AG04450 (cell line): ENCODE measurements at regions of chr3 and their contacts with region 1.

Region 1: GRCh38 chr3:33372218-33373081 is 67.8 kb downstream of the UBP1 start:
- DNase-seq: no peak
- H3K4me3 ChIP-seq: no peak overlapping the region
- H3K27ac ChIP-seq: no peak overlapping the region
- H3K27me3 ChIP-seq: no peaks in the 10 kb centered on the region
- CTCF ChIP-seq: peak; percentile 95

Region 2: GRCh38 chr3:32947789-32948238 is 424.6 kb before region 1 on chr3:
- CTCF ChIA-PET with region 1: interaction called, 27 read pairs
- POLR2A ChIA-PET with region 1: no interaction called
- DNase-seq: peak; percentile 51
- H3K4me3 ChIP-seq: no peak overlapping the region
- H3K27ac ChIP-seq: no peak overlapping the region
- H3K27me3 ChIP-seq: peaks cover 9% of the 10 kb centered on the region
- CTCF ChIP-seq: peak; percentile 84

Region 3: GRCh38 chr3:33122991-33123390 is 249.5 kb before region 1 on chr3:
- CTCF ChIA-PET with region 1: interaction called, 17 read pairs
- POLR2A ChIA-PET with region 1: no interaction called
- DNase-seq: no peak
- H3K4me3 ChIP-seq: no peak overlapping the region
- H3K27ac ChIP-seq: no peak overlapping the region
- H3K27me3 ChIP-seq: no peaks in the 10 kb centered on the region
- CTCF ChIP-seq: no peak

Region 4: DNA sequence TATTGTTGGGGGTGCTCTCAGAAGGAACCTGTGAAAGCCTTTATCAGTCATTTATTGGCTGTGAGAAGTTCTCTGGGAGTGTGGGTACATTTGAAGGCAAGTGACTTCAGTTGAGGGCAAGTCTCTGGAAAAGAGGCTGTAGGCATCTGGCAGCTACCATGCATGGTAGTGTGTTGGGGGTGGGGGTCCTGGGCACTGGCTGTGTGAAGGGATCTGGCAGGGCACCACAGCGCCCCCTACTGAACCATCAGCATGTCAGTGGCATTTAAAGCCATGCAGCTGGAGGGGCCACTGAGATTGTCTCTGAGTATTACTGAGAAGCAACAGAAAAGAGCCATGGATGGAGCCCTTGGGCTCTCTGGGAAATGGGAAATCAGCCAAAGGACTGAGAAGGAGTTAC is 228.0 kb before region 1 on chr3:
- CTCF ChIA-PET with region 1: interaction called, 38 read pairs
- POLR2A ChIA-PET with region 1: interaction called, 3 read pairs
- DNase-seq: no peak
- H3K4me3 ChIP-seq: no peak overlapping the region
- H3K27ac ChIP-seq: no peak overlapping the region
- H3K27me3 ChIP-seq: no peaks in the 10 kb centered on the region
- CTCF ChIP-seq: 0 out of 2 replicates have a peak, but pooled peaks have one; percentile 11

Region 5: DNA sequence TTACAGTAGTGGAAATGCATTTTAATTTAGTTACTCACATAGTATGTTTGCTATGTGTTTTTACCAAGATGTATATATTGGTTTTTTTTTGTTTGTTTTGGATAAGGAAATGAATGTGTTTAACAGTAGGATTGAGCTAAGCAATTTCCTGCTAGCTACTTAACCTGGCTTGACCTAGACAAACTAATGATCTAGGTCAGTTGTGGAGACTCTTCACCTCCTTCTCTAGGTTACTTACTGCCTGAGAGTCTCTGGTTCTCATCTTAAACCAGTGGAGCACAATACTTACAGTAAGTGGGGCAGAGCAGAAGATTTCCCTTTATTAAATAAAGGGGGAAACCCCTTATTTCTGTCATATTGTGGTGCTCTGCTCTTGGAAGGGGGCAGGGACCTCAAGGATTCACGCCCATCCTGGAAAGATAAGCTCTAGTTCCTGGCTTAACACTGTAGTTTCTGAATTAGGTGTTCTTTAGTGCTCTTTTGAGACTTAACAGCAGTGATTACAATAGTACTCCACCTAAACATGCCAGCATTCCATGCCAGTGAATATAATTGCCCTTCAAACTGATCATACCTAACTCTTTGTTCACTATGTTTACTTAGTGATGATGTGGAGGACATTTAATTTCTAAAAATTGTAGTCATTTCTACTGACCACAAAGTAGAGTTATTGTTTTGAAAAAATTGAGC is 12.2 kb before region 1 on chr3:
- CTCF ChIA-PET with region 1: interaction called, 40 read pairs
- POLR2A ChIA-PET with region 1: interaction called, 3 read pairs
- DNase-seq: no peak
- H3K4me3 ChIP-seq: no peak overlapping the region
- H3K27ac ChIP-seq: peak overlapping the region; percentile 21
- H3K27me3 ChIP-seq: no peaks in the 10 kb centered on the region
- CTCF ChIP-seq: no peak

Region 6: DNA sequence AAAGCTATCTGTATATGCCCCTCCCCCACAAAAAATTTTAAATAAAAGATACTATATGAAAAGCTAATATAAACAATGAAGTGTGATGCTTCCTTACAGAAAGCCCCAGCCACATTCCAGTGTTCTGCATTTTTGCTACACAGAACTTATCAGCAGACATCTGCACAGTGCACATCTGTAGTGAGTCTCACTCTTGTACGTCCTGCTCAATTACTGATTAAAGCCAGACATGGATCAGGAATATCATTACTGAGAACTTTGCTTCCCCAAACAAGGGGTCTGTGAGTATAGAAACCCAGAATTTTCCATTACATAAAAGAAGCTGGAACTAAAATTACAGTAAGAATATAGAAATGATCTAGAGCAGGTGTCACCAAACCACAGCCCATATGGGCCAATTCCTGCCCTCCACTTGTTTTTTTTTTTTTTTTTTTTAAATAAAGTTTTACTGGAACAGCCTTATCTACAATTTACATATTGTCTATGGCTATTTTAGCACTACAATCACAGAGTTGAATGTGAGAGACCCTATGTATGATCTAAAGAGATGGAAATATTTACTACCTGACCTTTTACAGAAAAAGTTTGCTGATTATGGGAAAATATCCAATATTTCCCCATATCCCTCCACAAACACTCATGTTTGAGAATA is 22.1 kb after region 1 on chr3:
- CTCF ChIA-PET with region 1: interaction called, 16 read pairs
- POLR2A ChIA-PET with region 1: no interaction called
- DNase-seq: no peak
- H3K4me3 ChIP-seq: no peak overlapping the region
- H3K27ac ChIP-seq: no peak overlapping the region
- H3K27me3 ChIP-seq: no peaks in the 10 kb centered on the region
- CTCF ChIP-seq: no peak

Region 7: GRCh38 chr3:33490641-33491241 is 118.3 kb after region 1 on chr3:
- CTCF ChIA-PET with region 1: no interaction called
- POLR2A ChIA-PET with region 1: no interaction called
- DNase-seq: no peak
- H3K4me3 ChIP-seq: no peak overlapping the region
- H3K27ac ChIP-seq: no peak overlapping the region
- H3K27me3 ChIP-seq: no peaks in the 10 kb centered on the region
- CTCF ChIP-seq: no peak